HepG2 (cell line): ENCODE measurements at regions of chr3 and their contacts with region 1.

Region 1: DNA sequence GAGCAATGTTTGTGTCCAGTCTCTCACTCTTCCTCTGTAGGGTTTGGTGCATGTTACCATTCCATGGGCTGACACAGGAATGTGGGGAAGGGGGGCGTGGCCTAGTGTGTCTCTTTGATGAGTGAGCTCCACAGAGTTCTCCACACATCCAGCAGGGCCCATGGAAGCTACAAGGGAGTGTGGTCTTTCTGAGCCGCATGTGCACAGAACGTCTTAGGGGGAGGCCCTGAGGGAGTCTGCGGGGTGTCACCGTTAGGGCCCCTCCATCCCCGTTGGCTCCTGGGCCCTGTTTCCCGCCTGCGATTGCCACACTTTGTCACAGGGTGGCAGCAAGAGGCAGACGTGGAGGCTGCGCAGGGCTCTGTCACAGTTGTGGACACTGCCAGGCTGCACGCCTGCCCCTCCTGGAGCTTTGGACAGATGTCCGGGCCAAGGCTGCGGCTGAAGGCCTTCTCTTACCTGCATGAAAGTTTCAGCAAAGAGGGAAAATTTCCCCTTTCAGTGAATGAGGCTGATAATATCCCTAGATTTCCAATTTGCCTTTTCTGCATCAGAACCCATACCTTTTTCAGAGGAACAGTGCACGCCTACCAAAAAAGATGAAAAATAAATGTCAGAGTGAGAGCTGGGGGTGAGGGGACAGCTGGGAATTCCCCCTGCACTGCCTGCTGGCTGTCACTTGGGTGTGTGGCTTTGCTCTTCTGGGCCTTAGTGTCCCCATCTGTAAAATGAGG is 24.3 kb downstream of the CACNA2D3 start:
- DNase-seq: peak; percentile 25
- ATAC-seq: peak; percentile 100
- H3K4me3 ChIP-seq: no peak overlapping the region
- H3K27ac ChIP-seq: no peak overlapping the region
- H3K4me1 ChIP-seq: no peaks in the 10 kb centered on the region
- H3K27me3 ChIP-seq: peaks cover 0 to 4% of the 10 kb centered on the region in 2 experiments; a peak in 1 of 5 replicates
- CTCF ChIP-seq: peak; percentile 82
- EP300 ChIP-seq: no peak
- POLR2A ChIP-seq: no peak
- RAD21 ChIP-seq: peak; percentile 86

Region 2: DNA sequence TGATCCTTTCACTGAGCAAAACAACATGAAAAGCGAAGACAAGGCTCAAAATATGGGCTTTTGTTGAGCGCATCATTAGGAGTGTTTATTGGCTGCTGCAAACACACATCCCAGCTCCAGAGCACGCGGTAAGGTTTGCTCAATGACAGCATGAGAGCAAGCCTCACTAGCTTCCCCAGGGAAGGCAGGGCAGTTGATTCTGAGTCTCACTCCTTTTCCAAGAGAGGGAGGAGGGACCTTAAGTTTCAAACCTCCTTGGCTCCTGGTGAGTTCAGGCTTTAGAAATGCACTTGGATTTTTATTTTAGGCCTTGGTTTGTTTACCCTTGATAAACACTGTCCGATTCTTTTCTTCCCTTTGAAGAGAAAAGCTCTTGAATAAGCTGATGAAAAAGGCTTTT is 93.5 kb before region 1 on chr3:
- CTCF ChIA-PET with region 1: no interaction called
- POLR2A ChIA-PET with region 1: no interaction called
- in situ Hi-C with region 1: no loop called
- intact Hi-C with region 1: no loop called
- DNase-seq: no peak
- ATAC-seq: no peak
- H3K4me3 ChIP-seq: no peak overlapping the region
- H3K27ac ChIP-seq: no peak overlapping the region
- H3K4me1 ChIP-seq: no peaks in the 10 kb centered on the region
- H3K27me3 ChIP-seq: peaks cover 0 to 7% of the 10 kb centered on the region in 2 experiments; a peak in 2 of 5 replicates
- CTCF ChIP-seq: no peak
- EP300 ChIP-seq: no peak
- POLR2A ChIP-seq: no peak
- RAD21 ChIP-seq: no peak

Region 3: GRCh38 chr3:54294214-54294613 is 147.5 kb after region 1 on chr3:
- CTCF ChIA-PET with region 1: no interaction called
- POLR2A ChIA-PET with region 1: no interaction called
- in situ Hi-C with region 1: no loop called
- intact Hi-C with region 1: loop called (anchors 10 kb)
- DNase-seq: no peak
- ATAC-seq: peak; percentile 45; the same call in 1 of the 3 replicates
- H3K4me3 ChIP-seq: no peak overlapping the region
- H3K27ac ChIP-seq: no peak overlapping the region
- H3K4me1 ChIP-seq: no peaks in the 10 kb centered on the region
- H3K27me3 ChIP-seq: peaks cover 0 to 9% of the 10 kb centered on the region in 2 experiments; a peak in 1 of 5 replicates
- CTCF ChIP-seq: no peak
- EP300 ChIP-seq: no peak
- POLR2A ChIP-seq: no peak
- RAD21 ChIP-seq: no peak

Region 4: DNA sequence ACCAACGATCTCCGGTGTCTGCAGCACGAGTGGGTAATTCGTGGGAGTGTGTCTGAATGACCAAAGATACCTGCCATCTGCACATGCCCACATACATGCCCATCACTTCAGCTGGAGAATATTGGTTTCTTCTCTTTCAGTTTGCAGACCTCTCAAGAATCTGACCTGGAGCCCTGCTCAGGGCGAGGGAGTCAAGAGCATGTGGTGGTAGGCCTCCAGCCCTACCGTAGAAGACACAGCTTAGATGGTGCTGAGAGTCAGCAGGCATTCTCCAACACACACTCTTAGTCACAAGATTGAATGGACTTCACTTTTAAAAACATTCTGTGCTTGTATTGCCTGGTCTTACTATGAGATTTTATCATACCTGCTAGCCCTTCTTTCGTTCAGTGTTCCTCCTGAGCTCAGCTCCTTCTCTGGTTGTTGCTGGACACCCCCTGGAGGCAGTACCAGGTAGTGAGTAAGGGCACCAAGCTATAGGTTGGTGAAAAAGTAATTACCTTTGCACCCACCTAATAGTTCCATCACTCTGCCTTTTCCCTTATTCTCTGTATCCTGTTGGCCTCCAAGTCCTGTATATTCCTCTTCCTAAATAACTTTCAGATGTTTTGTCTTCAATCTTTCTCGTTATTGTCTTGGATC is 227.7 kb after region 1 on chr3:
- CTCF ChIA-PET with region 1: no interaction called
- POLR2A ChIA-PET with region 1: no interaction called
- in situ Hi-C with region 1: no loop called
- intact Hi-C with region 1: loop called (anchors 1 kb)
- DNase-seq: peak; percentile 15
- ATAC-seq: peak; percentile 84
- H3K4me3 ChIP-seq: no peak overlapping the region
- H3K27ac ChIP-seq: no peak overlapping the region
- H3K4me1 ChIP-seq: no peaks in the 10 kb centered on the region
- H3K27me3 ChIP-seq: 0 out of 5 replicates have a peak, but pooled peaks cover 0 to 3% of the 10 kb centered on the region in 2 experiments
- CTCF ChIP-seq: peak; percentile 58
- EP300 ChIP-seq: no peak
- POLR2A ChIP-seq: no peak
- RAD21 ChIP-seq: no peak

Region 5: DNA sequence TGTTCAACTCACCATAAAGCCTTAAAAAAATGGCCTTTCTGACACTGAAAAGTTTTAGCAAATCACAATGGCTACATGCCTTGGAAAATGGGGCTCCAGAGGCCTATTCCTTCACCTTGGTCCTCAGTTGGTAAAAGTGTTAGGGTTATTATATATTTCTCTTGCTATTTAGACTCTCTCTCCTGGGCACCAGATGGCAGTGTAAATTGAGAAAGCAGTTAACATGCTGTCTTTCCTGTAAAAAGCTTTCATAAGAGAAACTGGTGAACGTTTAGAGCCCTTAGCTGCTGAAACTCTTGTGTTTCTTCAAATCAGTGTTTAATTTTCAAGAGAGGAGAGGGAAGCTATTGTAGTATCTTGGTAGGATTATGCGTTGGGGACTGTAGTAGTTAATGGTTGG is 691.3 kb after region 1 on chr3:
- CTCF ChIA-PET with region 1: no interaction called
- POLR2A ChIA-PET with region 1: no interaction called
- in situ Hi-C with region 1: no loop called
- intact Hi-C with region 1: no loop called
- DNase-seq: no peak
- ATAC-seq: no peak
- H3K4me3 ChIP-seq: no peak overlapping the region
- H3K27ac ChIP-seq: no peak overlapping the region
- H3K4me1 ChIP-seq: peaks cover 5% of the 10 kb centered on the region; the same call in 1 of the 2 replicates
- H3K27me3 ChIP-seq: no peaks in the 10 kb centered on the region
- CTCF ChIP-seq: no peak
- EP300 ChIP-seq: no peak
- POLR2A ChIP-seq: no peak
- RAD21 ChIP-seq: no peak